ENCODE measurements at regions of chr5 and their contacts with region 1.

Region 1: DNA sequence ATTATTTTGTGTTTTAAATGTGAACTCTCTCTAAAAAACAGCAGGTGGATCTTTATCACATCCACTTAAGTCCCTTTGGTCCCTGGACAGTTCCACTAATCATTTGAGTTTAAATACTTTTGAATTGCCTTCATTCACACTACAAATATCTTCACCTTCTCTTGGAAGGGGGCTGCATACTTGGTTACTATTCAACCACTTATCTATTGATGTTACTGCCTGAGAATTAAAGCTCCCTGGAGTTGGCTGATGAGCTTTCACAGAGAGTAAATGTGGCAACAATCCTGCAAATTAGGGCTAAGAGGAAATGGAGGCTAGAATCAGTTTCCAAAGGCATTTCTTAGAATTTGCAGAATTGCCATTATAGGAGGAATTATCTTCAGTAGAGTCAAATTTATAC is 180.4 kb downstream of the ST8SIA4 start:
- DNase-seq: no peak
- H3K4me3 ChIP-seq: no peak overlapping the region
- H3K27ac ChIP-seq: no peak overlapping the region
- H3K4me1 ChIP-seq: no peaks in the 10 kb centered on the region
- H3K27me3 ChIP-seq: no peaks in the 10 kb centered on the region
- CTCF ChIP-seq: no peak
- POLR2A ChIP-seq: no peak

Region 2: GRCh38 chr5:100609594-100609993 is 113.1 kb before region 1 on chr5:
- CTCF ChIA-PET with region 1: no interaction called
- POLR2A ChIA-PET with region 1: no interaction called
- dilution Hi-C with region 1: no loop called
- intact Hi-C with region 1: no loop called
- DNase-seq: no peak
- H3K4me3 ChIP-seq: no peak overlapping the region
- H3K27ac ChIP-seq: no peak overlapping the region
- H3K4me1 ChIP-seq: no peaks in the 10 kb centered on the region
- H3K27me3 ChIP-seq: no peaks in the 10 kb centered on the region
- CTCF ChIP-seq: no peak
- POLR2A ChIP-seq: no peak

Region 3: DNA sequence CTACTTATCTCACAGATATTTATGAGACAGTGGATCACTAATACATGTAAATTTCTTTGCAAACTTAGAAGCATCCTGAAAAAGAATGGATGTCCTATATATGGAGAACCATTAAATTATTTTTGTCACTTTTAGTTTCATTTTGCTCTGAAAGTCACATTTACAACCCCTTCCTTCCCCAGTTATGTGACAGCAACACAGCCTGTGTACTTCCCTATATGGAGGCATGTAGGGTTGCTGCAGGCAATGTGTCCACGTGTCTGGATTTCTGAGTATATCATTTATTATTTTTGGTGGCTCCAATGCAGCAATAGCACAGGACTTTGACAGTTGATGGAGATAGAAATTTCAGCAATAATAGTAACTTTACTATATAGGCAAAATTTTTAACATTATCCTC is 24.1 kb after region 1 on chr5:
- CTCF ChIA-PET with region 1: no interaction called
- POLR2A ChIA-PET with region 1: interaction called, 12 read pairs
- dilution Hi-C with region 1: no loop called
- intact Hi-C with region 1: no loop called
- DNase-seq: no peak
- H3K4me3 ChIP-seq: no peak overlapping the region
- H3K27ac ChIP-seq: no peak overlapping the region
- H3K4me1 ChIP-seq: no peaks in the 10 kb centered on the region
- H3K27me3 ChIP-seq: no peaks in the 10 kb centered on the region
- CTCF ChIP-seq: no peak
- POLR2A ChIP-seq: no peak

Measured in endothelial cell of umbilical vein (primary cell).